Activated B cell treated with CpG ODN at 0.5 μM for 24 hours (primary cell): ENCODE measurements at regions of chr6 and their contacts with region 1.

Region 1: DNA sequence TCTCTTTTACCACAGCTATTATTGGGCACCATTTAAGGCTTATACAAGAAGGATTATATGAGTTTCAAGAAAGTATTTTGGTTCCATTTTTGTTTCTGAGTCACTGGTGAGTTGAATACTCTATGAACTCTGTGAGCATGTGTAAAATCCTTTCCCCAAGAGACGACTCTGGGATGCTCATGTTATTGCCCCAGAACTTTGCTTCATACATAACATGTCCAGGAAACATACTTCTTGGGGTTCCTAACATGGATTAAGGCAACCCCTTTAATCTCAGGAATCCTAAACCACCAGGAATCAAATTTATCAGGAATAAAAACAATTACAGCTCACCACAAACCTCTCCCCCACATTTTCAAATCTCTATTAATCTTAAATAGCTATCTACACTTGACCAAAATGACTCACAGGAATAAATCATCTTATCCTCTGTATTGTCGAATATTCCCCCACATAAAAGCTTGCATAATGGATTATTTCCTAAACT is 117.5 kb upstream of the COL21A1 start:
- DNase-seq: no peak
- ATAC-seq: no peak
- H3K4me3 Mint-ChIP-seq: no peak overlapping the region
- H3K27ac Mint-ChIP-seq: no peak overlapping the region
- H3K4me1 Mint-ChIP-seq: no peaks in the 10 kb centered on the region
- H3K27me3 Mint-ChIP-seq: no peaks in the 10 kb centered on the region
- CTCF ChIP-seq: no peak

Region 2: DNA sequence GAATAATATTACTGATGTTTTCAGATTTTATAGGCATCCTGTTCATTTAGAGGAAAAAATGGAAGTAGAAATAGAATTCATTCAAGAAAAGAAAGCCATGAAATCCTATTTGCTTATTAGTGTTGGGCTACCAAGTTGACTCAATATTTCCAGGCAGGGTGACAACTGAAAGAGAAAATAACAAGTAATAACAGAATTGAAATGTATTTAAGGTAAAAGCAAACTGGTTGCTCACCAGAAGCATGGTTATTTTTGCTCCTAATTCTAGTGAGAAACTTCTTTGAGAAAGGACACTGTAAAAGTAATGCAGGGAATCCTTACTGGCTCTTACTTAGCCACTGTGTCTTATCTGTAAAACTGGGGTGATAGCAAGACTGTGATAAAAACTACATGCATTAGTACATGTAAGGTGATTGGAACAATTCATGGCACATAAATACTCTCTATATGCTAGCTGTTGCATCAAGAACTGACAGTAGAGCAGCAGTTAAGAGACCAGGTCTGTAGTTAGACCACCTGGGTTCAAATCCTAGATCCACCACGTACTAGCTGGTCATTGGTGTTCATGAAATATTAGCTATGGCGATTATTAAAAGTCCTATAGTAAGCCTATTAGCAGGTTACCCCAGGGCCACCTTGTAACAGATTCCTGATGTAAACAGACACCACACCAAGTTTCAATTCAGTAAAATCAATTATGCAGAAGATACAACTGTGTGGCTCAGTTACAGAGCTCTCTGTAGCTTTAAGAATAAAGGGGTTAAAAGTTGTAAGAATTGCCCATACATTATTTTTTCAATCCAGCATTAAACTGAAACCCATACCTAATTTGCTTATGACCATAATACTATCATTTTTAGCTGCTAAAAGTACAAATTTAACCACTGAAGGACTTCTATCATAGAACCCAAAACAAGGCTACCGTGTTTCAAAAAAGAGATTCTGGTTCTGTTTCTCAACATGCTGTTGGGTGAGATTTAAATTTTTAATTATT is 41.7 kb after region 1 on chr6:
- CTCF ChIA-PET with region 1: no interaction called
- POLR2A ChIA-PET with region 1: no interaction called
- intact Hi-C with region 1: no loop called
- DNase-seq: no peak
- ATAC-seq: no peak
- H3K4me3 Mint-ChIP-seq: no peak overlapping the region
- H3K27ac Mint-ChIP-seq: no peak overlapping the region
- H3K4me1 Mint-ChIP-seq: no peaks in the 10 kb centered on the region
- H3K27me3 Mint-ChIP-seq: no peaks in the 10 kb centered on the region
- CTCF ChIP-seq: no peak

Region 3: DNA sequence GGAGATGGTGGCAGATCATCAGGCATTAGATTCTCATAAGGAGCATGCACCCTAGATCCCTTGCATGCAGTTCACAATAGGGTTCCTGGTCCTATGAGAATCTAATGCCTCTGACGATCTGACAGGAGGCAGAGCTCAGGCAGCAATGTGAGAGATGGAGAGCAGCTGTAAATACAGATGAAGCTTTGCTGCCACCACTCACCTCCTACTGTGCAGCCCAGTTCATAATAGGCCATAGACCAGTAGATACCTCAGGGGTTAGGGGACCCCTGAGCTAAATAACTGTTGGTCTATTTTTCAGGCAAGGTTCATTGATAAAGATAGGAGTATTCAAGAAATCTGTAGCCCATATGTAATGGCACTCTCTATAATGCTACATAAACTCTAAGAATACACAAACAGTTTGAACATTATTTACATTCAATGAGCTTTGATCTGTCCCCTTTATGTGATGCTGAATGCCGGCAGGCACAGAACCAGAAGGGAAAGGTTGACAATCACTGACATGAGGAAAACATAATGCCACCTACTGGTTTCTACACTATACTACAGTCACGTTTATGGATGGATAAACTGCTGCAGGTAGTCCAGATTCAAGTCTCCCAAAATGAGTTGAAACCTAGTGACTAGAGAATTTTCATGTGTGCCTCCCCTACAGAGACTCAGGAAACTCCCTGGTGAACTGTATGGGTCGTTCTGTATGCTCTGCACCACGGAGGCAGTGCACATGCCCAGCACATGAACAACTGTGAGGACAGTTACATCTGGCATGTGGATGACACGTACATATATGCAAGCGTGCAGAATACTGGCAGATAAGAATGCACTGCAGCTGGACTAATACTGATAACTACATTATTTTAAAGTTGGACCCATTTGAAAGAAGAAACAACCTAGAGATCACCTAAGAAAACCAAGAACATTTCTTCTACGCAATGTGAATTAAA is 205.8 kb after region 1 on chr6:
- CTCF ChIA-PET with region 1: interaction called, 14 read pairs
- POLR2A ChIA-PET with region 1: no interaction called
- intact Hi-C with region 1: no loop called
- DNase-seq: no peak
- ATAC-seq: peak; percentile 37
- H3K4me3 Mint-ChIP-seq: no peak overlapping the region
- H3K27ac Mint-ChIP-seq: no peak overlapping the region
- H3K4me1 Mint-ChIP-seq: no peaks in the 10 kb centered on the region
- H3K27me3 Mint-ChIP-seq: no peaks in the 10 kb centered on the region
- CTCF ChIP-seq: peak; percentile 17